ENCODE measurements at regions of chr18 and their contacts with region 1.

Region 1: GRCh38 chr18:35616664-35617423 is 35.3 kb downstream of the GALNT1 start:
- DNase-seq: peak; percentile 57
- H3K4me3 Mint-ChIP-seq: no peak overlapping the region
- H3K27ac Mint-ChIP-seq: no peak overlapping the region
- H3K4me1 Mint-ChIP-seq: peaks cover 15% of the 10 kb centered on the region
- H3K27me3 Mint-ChIP-seq: no peaks in the 10 kb centered on the region

Region 2: DNA sequence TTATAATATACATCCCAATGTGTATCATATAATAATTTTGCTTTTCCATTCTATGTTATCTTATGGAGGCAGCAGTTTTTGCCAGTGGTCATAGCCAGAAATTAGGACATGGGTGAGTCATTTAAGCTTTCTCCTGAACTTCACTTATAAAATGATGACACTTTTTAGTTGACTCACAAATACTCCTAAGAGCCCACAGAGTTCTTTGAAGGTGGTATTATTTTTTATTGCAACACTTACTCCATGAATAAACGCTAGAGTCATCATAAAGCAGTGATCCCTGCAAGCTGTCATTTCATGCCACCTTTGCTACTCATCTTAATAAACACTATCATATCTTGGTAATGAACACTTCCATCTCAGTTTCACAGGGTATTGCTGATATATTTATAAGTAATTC is 645.5 kb before region 1 on chr18:
- intact Hi-C with region 1: no loop called
- DNase-seq: no peak
- H3K4me3 Mint-ChIP-seq: no peak overlapping the region
- H3K27ac Mint-ChIP-seq: no peak overlapping the region
- H3K4me1 Mint-ChIP-seq: peaks cover 8% of the 10 kb centered on the region
- H3K27me3 Mint-ChIP-seq: peaks cover 47% of the 10 kb centered on the region

Region 3: DNA sequence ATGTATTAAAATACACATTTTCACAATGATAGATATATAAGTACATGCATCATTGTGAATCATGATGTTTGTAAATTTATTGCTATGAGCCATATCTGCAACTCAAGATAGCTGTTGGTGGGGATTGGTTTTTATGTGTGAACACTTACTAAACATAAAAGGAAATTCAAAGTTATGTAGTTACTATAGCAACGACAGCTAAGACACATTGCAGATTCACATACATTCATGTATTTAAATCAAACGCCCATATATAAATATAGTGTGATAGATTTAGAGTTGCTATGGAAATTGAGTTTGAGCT is 510.0 kb before region 1 on chr18:
- intact Hi-C with region 1: no loop called
- DNase-seq: no peak
- H3K4me3 Mint-ChIP-seq: no peak overlapping the region
- H3K27ac Mint-ChIP-seq: no peak overlapping the region
- H3K4me1 Mint-ChIP-seq: peaks cover 14% of the 10 kb centered on the region
- H3K27me3 Mint-ChIP-seq: no peaks in the 10 kb centered on the region

Region 4: GRCh38 chr18:35264409-35264808 is 352.4 kb before region 1 on chr18:
- intact Hi-C with region 1: no loop called
- DNase-seq: no peak
- H3K4me3 Mint-ChIP-seq: no peak overlapping the region
- H3K27ac Mint-ChIP-seq: no peak overlapping the region
- H3K4me1 Mint-ChIP-seq: peaks cover 5% of the 10 kb centered on the region
- H3K27me3 Mint-ChIP-seq: no peaks in the 10 kb centered on the region

Region 5: GRCh38 chr18:35478520-35479435 is 138.1 kb before region 1 on chr18:
- intact Hi-C with region 1: loop called (anchors 2 kb)
- DNase-seq: no peak
- H3K4me3 Mint-ChIP-seq: no peak overlapping the region
- H3K27ac Mint-ChIP-seq: peak overlapping the region; percentile 57
- H3K4me1 Mint-ChIP-seq: peaks cover 21% of the 10 kb centered on the region
- H3K27me3 Mint-ChIP-seq: no peaks in the 10 kb centered on the region